ENCODE measurements at regions of chr1 and their contacts with region 1.

Region 1: DNA sequence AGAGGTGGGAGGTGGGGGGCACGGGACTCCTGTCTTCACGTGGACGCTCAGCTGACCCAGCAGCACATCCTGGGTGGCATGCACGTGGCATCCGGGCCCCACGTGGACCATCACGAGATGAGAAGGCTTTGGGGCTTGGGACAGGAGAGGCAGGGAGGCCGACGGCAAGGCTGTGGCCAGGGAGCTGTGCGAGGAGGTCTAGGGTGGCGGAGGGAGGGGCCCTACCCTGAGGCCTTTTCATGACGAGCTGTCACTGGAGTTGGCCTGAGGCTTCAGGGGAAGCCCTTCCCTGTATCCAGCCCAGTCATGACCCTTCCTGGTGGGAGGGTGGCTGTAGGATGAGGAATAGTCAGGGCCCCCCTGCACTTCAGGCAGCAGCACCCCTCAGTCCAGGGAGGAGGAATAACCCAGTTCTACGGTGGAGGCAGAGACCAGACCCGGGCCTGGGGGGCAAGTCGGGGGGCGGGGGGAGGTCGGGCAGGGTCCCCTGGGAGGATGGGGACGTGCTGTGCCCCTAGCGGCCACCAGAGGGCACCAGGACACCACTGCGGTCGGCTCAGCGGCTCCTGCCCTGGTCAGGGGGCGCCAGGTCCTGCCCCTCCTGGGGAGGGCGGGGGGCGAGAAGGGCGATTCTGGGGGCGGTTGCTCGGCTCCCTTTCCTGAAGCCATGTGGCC is 2.0 kb upstream of the PERM1 start:
- DNase-seq: peak; percentile 26 to 85 (median 60)
- ATAC-seq: peak; percentile 61 to 92 (median 84)
- H3K4me3 ChIP-seq: no peak overlapping the region
- H3K27ac ChIP-seq: no peak overlapping the region
- H3K4me1 ChIP-seq: no peaks in the 10 kb centered on the region
- H3K27me3 ChIP-seq: no peaks in the 10 kb centered on the region
- CTCF ChIP-seq: peak; percentile 82 to 96 (median 86)

Region 2: DNA sequence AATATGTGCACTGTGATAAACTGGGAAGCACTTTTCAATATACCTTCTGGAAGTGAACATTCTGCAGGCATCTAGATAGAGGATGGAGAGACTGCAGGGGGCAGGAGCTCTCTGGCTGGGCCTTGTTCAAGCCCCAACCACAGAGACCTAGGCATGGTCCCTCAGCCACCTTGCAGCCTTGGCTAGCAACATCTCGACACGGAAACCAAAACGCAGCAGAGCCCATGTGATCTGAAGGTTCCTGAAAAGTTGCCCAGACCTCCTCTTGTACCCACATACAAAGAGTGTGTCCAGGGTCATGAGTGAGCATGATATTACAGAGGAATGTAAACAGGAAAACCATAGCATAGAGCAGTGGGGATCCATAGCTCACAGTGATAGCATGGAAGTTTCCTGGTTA is 93.3 kb before region 1 on chr1:
- intact Hi-C with region 1: no loop called
- DNase-seq: no peak
- ATAC-seq: no peak
- H3K4me3 ChIP-seq: no peak overlapping the region
- H3K27ac ChIP-seq: no peak overlapping the region
- H3K4me1 ChIP-seq: no peaks in the 10 kb centered on the region
- H3K27me3 ChIP-seq: no peaks in the 10 kb centered on the region
- CTCF ChIP-seq: no peak

Region 3: DNA sequence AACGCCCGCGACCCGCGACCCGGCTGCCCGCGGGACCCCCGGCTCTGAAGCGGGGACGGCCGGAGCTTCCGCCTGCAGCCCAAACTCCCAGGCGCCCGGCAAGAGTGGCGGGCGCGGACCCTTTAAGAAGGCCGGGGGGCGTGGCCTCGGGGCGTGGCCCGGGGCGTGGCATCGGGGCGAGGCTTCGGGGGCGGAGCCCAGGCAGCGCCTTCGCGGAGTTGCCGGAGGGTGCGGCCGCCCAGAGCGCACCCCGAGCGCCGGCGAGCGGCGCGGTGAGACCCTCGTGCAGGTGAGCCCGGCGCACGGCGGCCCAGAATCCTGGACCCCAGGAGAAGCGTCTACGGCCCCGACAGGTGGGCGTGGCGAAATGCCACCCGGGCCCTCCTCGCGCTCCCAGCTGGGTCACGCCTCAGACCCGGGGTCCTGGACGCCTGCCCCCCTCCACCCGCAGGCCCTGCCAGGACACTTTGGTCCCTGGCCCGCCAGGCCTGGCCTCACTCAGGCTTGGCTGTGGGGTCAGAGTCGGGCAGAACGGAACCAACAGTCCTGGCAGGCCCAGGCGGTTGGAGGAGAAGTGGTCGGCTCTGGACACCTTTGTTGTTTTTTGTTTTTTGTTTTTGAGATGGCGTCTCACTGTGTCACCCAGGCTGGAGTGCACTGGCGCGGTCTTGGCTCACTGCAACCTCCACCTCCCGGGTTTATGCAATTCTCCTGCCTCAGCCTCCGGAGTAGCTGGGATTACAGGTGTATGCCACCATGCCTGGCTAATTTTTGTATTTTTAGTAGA is 75.8 kb after region 1 on chr1:
- intact Hi-C with region 1: loop called in 2 of 3 experiments (anchors 2 to 10 kb)
- DNase-seq: peak; percentile 82 to 98 (median 94)
- ATAC-seq: peak; percentile 88 to 94 (median 90)
- H3K4me3 ChIP-seq: peak overlapping the region; percentile 37 to 69 (median 54)
- H3K27ac ChIP-seq: no peak overlapping the region
- H3K4me1 ChIP-seq: peaks cover 0 to 14% (median 9%) of the 10 kb centered on the region in 3 donors
- H3K27me3 ChIP-seq: peaks cover 0 to 9% (median 0%) of the 10 kb centered on the region in 4 donors
- CTCF ChIP-seq: no peak

Region 4: GRCh38 chr1:1069061-1069708 is 85.2 kb after region 1 on chr1:
- intact Hi-C with region 1: loop called in 2 of 3 experiments (anchors 5 to 10 kb)
- DNase-seq: peak; percentile 76 to 98 (median 94)
- ATAC-seq: peak; percentile 76 to 87 (median 81)
- H3K4me3 ChIP-seq: peak overlapping the region; percentile 22 to 59 (median 37)
- H3K27ac ChIP-seq: peak overlapping the region; percentile 38 to 55 (median 51)
- H3K4me1 ChIP-seq: peaks cover 0 to 3% (median 3%) of the 10 kb centered on the region in 3 donors
- H3K27me3 ChIP-seq: no peaks in the 10 kb centered on the region
- CTCF ChIP-seq: no peak

Region 5: DNA sequence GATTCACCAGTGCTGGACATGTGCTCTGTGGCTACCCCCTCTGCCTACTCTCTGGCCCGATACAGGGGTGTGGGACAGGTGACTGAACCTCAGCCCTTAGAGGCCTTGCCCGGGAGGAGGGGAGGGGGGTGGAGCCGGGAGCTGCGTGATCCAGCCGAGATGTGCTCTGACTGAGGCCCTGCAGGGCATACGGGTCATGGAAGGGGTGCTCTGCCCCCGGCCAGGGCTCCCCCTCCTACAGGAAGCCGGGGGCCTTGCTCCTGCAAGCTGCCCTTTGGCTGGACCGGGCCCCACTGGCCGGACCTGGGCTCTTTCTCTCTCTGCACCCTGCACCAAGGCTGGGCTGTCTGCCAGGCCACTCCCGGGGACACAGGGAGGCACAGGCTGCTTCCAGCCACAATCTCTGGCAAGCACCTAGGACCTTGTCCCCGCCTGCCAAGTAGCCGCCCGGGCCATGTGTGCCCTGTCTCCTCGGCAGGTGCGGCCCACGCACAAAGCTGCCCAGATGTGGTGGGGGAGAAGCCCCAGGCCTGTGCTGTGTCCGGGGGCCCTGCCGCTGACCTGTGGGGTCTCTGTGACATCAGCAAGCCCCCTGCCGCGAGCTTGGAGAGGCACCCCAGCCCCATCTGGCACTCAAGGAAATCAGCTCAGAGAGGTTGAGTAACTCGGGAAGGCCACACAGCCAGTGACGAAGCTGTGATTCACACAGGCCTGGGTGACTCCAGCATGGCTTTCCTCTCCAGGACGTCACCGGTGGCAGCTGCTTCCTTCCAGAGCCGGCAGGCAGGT is 297.8 kb after region 1 on chr1:
- intact Hi-C with region 1: loop called in 1 of 3 experiments (anchors 10 kb)
- DNase-seq: peak; percentile 83 to 96 (median 88)
- ATAC-seq: peak; percentile 84 to 96 (median 92)
- H3K4me3 ChIP-seq: no peak overlapping the region
- H3K27ac ChIP-seq: peak overlapping the region; percentile 1 to 61 (median 39)
- H3K4me1 ChIP-seq: peaks cover 5 to 11% (median 10%) of the 10 kb centered on the region in 3 donors
- H3K27me3 ChIP-seq: peaks cover 0 to 4% (median 0%) of the 10 kb centered on the region in 4 donors
- CTCF ChIP-seq: no peak